Caco-2 (cell line): ENCODE measurements at regions of chr20 and their contacts with region 1.

Region 1: GRCh38 chr20:44747166-44748004 is 1.7 kb downstream of the KCNK15 start:
- DNase-seq: peak; percentile 91 to 96
- H3K4me3 ChIP-seq: no peak overlapping the region
- H3K4me3 Mint-ChIP-seq: peak overlapping the region; percentile 66
- H3K27ac Mint-ChIP-seq: peak overlapping the region; percentile 85
- H3K4me1 ChIP-seq: peaks cover 11% of the 10 kb centered on the region
- H3K4me1 Mint-ChIP-seq: peaks cover 15% of the 10 kb centered on the region
- H3K27me3 ChIP-seq: peaks cover 2% of the 10 kb centered on the region; the same call in 1 of the 2 replicates
- H3K27me3 Mint-ChIP-seq: peaks cover 6% of the 10 kb centered on the region
- CTCF ChIP-seq: peak; percentile 92 to 96

Region 2: GRCh38 chr20:44780226-44780625 is 32.8 kb after region 1 on chr20:
- CTCF ChIA-PET with region 1: interaction called, 8 read pairs
- POLR2A ChIA-PET with region 1: no interaction called
- intact Hi-C with region 1: loop called (anchors 1 kb)
- DNase-seq: peak; percentile 76 to 88
- H3K4me3 ChIP-seq: no peak overlapping the region
- H3K4me3 Mint-ChIP-seq: no peak overlapping the region
- H3K27ac Mint-ChIP-seq: no peak overlapping the region
- H3K4me1 ChIP-seq: no peaks in the 10 kb centered on the region
- H3K4me1 Mint-ChIP-seq: no peaks in the 10 kb centered on the region
- H3K27me3 ChIP-seq: no peaks in the 10 kb centered on the region
- H3K27me3 Mint-ChIP-seq: peaks cover 9% of the 10 kb centered on the region
- CTCF ChIP-seq: no peak

Region 3: GRCh38 chr20:44800398-44801046 is 53.1 kb after region 1 on chr20:
- CTCF ChIA-PET with region 1: interaction called, 7 read pairs
- POLR2A ChIA-PET with region 1: no interaction called
- intact Hi-C with region 1: loop called (anchors 2 kb)
- DNase-seq: peak in 1 of 2 experiments; percentile 35
- H3K4me3 ChIP-seq: no peak overlapping the region
- H3K4me3 Mint-ChIP-seq: no peak overlapping the region
- H3K27ac Mint-ChIP-seq: no peak overlapping the region
- H3K4me1 ChIP-seq: no peaks in the 10 kb centered on the region
- H3K4me1 Mint-ChIP-seq: no peaks in the 10 kb centered on the region
- H3K27me3 ChIP-seq: no peaks in the 10 kb centered on the region
- H3K27me3 Mint-ChIP-seq: peaks cover 4% of the 10 kb centered on the region
- CTCF ChIP-seq: peak; percentile 59 to 62

Region 4: DNA sequence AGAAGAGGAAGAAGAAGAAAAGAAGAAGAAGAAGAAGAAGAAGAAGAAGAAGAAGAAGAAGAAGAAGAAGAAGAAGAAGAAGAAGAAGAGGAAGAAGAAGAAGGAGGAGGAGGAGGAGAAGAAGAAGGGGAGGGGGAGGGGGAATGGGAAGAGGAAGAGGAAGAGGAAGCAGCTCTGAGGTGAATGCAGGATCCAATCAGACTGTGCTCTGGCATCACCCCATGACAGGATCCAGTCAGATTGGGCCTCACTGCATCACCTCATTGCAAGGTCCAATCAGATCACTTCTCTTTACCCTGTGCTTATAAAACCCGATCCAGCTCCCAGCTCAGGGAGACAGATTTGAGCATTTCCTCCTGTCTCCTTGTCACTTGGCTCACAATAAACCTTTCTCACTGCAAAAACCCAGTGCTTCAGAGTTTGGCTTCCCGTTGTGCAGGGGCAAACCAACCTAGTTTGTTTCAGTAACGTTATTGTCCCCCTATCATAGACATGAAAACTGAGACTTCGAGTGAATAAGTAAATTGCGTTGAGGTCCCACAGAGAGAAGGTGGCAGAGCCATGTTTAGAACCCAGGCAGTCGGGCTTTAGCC is 109.6 kb after region 1 on chr20:
- CTCF ChIA-PET with region 1: interaction called, 12 read pairs
- POLR2A ChIA-PET with region 1: no interaction called
- intact Hi-C with region 1: no loop called
- DNase-seq: peak; percentile 50 to 69
- H3K4me3 ChIP-seq: no peak overlapping the region
- H3K4me3 Mint-ChIP-seq: peak overlapping the region; percentile 13
- H3K27ac Mint-ChIP-seq: peak overlapping the region; percentile 86
- H3K4me1 ChIP-seq: peaks cover 24% of the 10 kb centered on the region
- H3K4me1 Mint-ChIP-seq: peaks cover 27% of the 10 kb centered on the region
- H3K27me3 ChIP-seq: no peaks in the 10 kb centered on the region
- H3K27me3 Mint-ChIP-seq: no peaks in the 10 kb centered on the region
- CTCF ChIP-seq: no peak

Region 5: GRCh38 chr20:44866703-44867335 is 119.4 kb after region 1 on chr20:
- CTCF ChIA-PET with region 1: interaction called, 17 read pairs
- POLR2A ChIA-PET with region 1: no interaction called
- intact Hi-C with region 1: loop called (anchors 1 kb)
- DNase-seq: no peak
- H3K4me3 ChIP-seq: no peak overlapping the region
- H3K4me3 Mint-ChIP-seq: no peak overlapping the region
- H3K27ac Mint-ChIP-seq: no peak overlapping the region
- H3K4me1 ChIP-seq: peaks cover 11% of the 10 kb centered on the region
- H3K4me1 Mint-ChIP-seq: peaks cover 14% of the 10 kb centered on the region
- H3K27me3 ChIP-seq: no peaks in the 10 kb centered on the region
- H3K27me3 Mint-ChIP-seq: peaks cover 11% of the 10 kb centered on the region
- CTCF ChIP-seq: no peak